ENCODE measurements at regions of chr15 and their contacts with region 1.

Region 1: DNA sequence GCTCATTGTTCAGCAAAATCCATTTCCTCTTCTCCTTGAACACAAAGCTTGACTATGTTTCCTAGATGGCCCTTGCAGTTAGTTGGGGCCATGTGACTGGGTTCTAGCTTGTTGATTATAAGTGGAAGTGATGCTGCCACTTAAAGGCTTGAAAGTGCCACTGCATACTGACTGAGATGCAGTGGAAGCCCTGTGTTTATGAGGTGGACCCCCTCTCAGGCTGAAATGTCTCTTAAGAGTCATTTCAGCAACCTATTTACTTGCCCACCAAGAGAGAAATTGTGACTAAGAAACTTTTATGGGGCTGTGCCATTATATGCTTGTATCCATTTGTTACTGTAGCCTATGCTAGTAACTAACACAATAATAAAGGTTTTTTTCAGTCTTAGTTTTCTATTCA is 8.4 kb upstream of the ANP32A start:
- DNase-seq: no peak
- ATAC-seq: peak; percentile 72 to 73

Region 2: GRCh38 chr15:68730471-68730919 is 98.6 kb before region 1 on chr15:
- intact Hi-C with region 1: loop called in 1 of 2 experiments (anchors 5 kb)
- DNase-seq: peak; percentile 51
- ATAC-seq: peak; percentile 44 to 47

Region 3: GRCh38 chr15:68773036-68773435 is 56.0 kb before region 1 on chr15:
- intact Hi-C with region 1: no loop called
- DNase-seq: no peak
- ATAC-seq: no peak

Region 4: GRCh38 chr15:68783226-68784058 is 45.6 kb before region 1 on chr15:
- intact Hi-C with region 1: loop called (anchors 5 kb)
- DNase-seq: no peak
- ATAC-seq: peak; percentile 45 to 47

Region 5: DNA sequence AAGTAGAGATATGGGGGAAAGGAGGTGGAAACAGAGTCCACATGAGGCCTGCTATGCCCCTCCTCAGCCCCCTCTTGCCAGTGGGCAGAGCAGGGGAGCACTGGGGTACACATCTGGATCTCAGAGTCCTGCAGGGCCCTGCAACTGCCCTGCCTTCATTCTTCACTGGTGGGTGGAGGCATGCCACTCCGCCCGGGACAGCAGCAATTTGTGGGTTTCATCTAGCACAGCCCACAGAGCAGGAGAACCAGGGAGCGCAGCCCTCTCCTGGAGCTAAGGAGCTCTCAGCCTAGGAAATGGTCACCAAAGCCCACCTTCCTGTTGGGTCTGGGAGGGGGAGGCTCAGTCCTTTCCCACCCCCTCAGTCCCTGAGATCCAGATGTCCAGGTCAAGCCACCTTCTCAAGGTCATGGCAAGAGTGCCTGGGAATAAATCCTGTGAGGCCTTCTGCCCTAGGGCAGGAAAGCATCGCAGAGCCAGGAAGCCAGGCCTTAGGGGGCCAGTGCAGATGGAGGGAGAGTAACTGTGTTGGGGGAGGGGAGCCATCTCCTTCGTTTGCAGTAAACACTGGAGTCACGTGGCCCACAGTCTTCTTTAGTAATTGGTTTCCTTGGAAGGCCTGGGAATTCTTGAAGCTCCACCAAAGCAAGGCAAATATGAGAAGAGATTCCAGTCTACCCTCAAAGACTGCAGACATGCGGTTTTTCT is 39.4 kb before region 1 on chr15:
- intact Hi-C with region 1: loop called (anchors 5 kb)
- DNase-seq: no peak
- ATAC-seq: no peak

Region 6: GRCh38 chr15:70047386-70048197 is 1218.5 kb after region 1 on chr15:
- intact Hi-C with region 1: no loop called
- DNase-seq: peak; percentile 54
- ATAC-seq: peak in 1 of 2 donors; percentile 68

Measured in left cardiac atrium (tissue), 4 donors.